Breast epithelium (tissue), 4 donors: ENCODE measurements at regions of chr5 and their contacts with region 1.

Region 1: DNA sequence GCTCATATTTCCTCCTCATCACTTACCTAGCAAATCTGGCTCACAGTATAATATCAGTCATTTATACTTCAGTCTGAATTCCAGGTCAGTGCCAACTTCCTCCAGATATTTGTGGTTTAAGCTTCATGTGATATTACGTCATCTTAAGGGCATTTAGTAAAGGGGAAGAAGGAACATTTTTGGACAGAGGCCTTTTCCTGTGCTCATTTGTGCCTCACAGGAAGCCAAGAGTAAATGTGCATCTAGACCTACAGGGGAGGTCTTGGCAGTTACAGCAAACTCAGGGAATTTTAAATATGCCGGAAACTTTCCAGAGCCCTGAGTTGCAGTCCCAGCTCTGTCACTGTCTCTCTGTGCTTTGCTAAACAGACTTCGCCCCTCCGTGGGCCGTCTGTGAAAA is 12.3 kb upstream of the KCNIP1 start:
- DNase-seq: peak in 1 of 2 donors; percentile 43
- H3K4me3 ChIP-seq: no peak overlapping the region
- H3K27ac ChIP-seq: peak overlapping the region; percentile 43 to 68
- H3K4me1 ChIP-seq: peaks cover 0 to 7% of the 10 kb centered on the region in 2 donors
- H3K27me3 ChIP-seq: no peaks in the 10 kb centered on the region
- CTCF ChIP-seq: no peak
- POLR2A ChIP-seq: no peak

Region 2: GRCh38 chr5:168647083-168647482 is 1844.4 kb before region 1 on chr5:
- intact Hi-C with region 1: loop called (anchors 5 kb)
- DNase-seq: no peak
- H3K4me3 ChIP-seq: no peak overlapping the region
- H3K27ac ChIP-seq: peak overlapping the region in 1 of 2 donors; percentile 58
- H3K4me1 ChIP-seq: no peaks in the 10 kb centered on the region
- H3K27me3 ChIP-seq: no peaks in the 10 kb centered on the region
- CTCF ChIP-seq: no peak
- POLR2A ChIP-seq: no peak

Region 3: GRCh38 chr5:170451747-170452365 is 39.6 kb before region 1 on chr5:
- intact Hi-C with region 1: no loop called
- DNase-seq: no peak
- H3K4me3 ChIP-seq: no peak overlapping the region
- H3K27ac ChIP-seq: no peak overlapping the region
- H3K4me1 ChIP-seq: no peaks in the 10 kb centered on the region
- H3K27me3 ChIP-seq: no peaks in the 10 kb centered on the region
- CTCF ChIP-seq: no peak
- POLR2A ChIP-seq: no peak

Region 4: DNA sequence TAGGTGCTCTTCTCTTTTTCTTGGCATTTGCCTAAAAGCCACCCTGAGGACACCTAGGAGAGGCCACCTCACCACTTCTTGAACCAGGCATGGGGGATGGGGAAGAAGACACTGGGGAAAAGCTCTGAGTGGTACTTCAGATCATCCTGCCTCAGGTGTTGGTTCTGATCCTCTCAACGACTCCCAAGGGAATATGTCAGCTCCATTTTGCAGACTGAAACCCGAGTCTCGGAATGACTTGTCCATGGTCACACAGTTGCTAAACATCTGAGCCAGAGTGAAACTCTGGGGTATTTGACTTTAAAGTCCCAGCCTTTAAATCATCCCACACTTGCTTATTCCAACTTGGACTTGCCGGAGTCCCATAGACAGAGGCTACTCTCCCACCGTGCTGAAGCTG is 171.5 kb after region 1 on chr5:
- intact Hi-C with region 1: no loop called
- DNase-seq: no peak
- H3K4me3 ChIP-seq: no peak overlapping the region
- H3K27ac ChIP-seq: no peak overlapping the region
- H3K4me1 ChIP-seq: no peaks in the 10 kb centered on the region
- H3K27me3 ChIP-seq: no peaks in the 10 kb centered on the region
- CTCF ChIP-seq: no peak
- POLR2A ChIP-seq: no peak